Activated CD4-positive, alpha-beta memory T cell treated with anti-CD3 and anti-CD28 coated beads for 36 hours (primary cell): ENCODE measurements at regions of chr2 and their contacts with region 1.

Region 1: DNA sequence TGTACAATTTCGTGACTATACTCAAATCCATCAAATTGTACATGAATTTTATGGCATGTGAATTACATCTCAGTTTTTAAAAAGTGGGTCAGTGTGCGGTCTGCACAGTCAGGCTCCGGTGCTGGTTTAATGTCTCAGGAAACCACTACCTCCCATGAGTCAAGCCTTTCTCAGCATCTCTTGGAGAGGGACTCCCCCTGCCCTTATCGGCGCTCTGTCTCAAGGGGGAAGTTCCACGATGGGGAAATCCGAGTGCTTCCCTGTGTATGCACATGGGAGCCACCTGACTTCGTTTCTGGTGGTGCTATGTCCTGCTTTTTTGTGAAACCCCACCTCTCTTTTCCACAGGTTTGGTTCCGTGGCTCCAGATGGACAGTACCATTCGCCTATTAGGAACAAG is 72.5 kb downstream of the ACOXL start:
- DNase-seq: peak; percentile 85
- H3K4me3 Mint-ChIP-seq: peak overlapping the region; percentile 3
- H3K27ac Mint-ChIP-seq: peak overlapping the region; percentile 29
- H3K4me1 Mint-ChIP-seq: peaks cover 16% of the 10 kb centered on the region
- H3K27me3 Mint-ChIP-seq: peaks cover 43% of the 10 kb centered on the region

Region 2: DNA sequence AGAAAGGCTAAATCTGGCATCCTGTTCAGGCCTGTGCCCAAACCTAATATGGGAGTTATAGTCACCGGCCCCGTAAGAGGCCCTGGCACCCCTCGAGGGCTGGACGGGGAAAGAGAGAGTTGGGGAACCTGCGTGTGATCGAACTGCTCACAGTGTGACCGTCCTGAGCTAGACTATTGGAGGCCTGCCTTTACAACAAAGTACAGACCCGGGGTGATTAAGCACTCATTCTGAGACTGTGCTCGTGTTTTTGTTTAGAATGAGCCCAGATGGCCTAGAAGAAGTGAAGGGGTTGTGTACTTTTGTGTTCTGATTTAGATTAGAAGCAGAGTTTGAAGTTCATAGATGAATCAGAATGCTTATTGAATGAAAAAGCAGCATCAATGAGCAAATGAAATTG is 42.7 kb after region 1 on chr2:
- CTCF ChIA-PET with region 1: interaction called, 4 read pairs
- POLR2A ChIA-PET with region 1: no interaction called
- intact Hi-C with region 1: loop called (anchors 1 kb)
- DNase-seq: peak; percentile 36
- H3K4me3 Mint-ChIP-seq: no peak overlapping the region
- H3K27ac Mint-ChIP-seq: peak overlapping the region; percentile 76
- H3K4me1 Mint-ChIP-seq: peaks cover 67% of the 10 kb centered on the region
- H3K27me3 Mint-ChIP-seq: peaks cover 22% of the 10 kb centered on the region